Endothelial cell of umbilical vein (primary cell): ENCODE measurements at regions of chr17 and their contacts with region 1.

Region 1: DNA sequence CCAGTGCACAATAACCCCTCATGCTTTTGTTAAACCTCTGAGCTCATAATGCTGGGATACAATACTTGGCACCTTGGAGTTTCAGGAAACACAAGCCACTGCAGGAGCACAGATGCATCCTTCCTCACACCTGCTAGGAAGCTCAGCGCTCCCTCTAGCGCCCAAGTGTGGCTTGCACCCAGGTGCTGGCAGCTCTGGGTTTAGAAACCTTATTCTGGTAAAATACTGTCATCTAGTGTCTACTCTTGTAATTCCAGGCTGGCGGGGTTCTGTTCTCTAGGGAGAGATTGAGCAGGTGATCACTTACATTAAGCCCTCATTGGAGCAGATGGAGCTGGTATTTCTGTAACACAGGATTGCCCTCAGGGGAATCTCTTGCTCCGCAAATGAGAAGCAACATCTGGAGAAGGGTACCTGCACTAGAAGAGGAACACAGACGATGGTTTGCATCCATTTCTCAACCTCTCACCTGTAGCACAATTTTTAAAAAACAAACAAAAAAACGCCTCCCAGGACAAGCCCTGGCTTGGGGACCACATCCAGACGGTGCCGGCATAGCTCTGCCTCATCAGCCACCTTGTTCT is 1.5 kb downstream of the CCL1 start:
- DNase-seq: peak; percentile 93
- H3K4me3 ChIP-seq: no peak overlapping the region
- H3K27ac ChIP-seq: no peak overlapping the region
- H3K4me1 ChIP-seq: peaks cover 7% of the 10 kb centered on the region
- H3K27me3 ChIP-seq: peaks cover 0 to 2% of the 10 kb centered on the region in 2 experiments
- CTCF ChIP-seq: peak; percentile 99 to 100
- POLR2A ChIP-seq: no peak

Region 2: DNA sequence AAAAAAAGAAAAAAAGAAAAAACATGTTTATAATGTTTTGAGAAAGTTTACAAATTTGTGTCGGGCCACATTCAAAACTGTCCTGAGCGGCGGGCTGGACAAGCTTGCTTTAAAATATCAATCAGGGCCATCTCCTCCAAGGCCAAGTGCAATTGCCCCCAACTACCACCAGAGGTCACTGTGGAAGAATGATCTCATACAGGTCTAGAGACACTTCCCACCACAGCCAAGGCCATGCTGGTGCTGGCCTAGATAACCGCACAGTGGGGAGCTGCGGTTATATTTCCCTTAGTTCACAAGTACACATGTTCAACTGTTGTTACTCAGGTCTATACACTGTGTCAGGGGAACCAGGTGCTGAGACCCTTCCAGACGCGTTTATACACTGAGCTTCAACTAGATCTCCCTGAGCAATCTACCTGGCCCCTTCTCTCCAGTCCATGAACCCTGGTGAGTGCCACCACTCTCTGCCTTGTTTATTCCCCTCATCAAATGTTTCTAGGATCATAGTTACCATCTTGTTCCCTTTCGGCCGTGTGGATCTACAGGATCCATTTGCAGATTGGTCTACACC is 190.2 kb before region 1 on chr17:
- CTCF ChIA-PET with region 1: interaction called, 197 read pairs
- POLR2A ChIA-PET with region 1: no interaction called
- dilution Hi-C with region 1: no loop called
- intact Hi-C with region 1: loop called (anchors 1 kb)
- DNase-seq: peak; percentile 73
- H3K4me3 ChIP-seq: no peak overlapping the region
- H3K27ac ChIP-seq: no peak overlapping the region
- H3K4me1 ChIP-seq: no peaks in the 10 kb centered on the region
- H3K27me3 ChIP-seq: peaks cover 12 to 19% of the 10 kb centered on the region in 2 experiments
- CTCF ChIP-seq: peak; percentile 87 to 91
- POLR2A ChIP-seq: no peak

Region 3: DNA sequence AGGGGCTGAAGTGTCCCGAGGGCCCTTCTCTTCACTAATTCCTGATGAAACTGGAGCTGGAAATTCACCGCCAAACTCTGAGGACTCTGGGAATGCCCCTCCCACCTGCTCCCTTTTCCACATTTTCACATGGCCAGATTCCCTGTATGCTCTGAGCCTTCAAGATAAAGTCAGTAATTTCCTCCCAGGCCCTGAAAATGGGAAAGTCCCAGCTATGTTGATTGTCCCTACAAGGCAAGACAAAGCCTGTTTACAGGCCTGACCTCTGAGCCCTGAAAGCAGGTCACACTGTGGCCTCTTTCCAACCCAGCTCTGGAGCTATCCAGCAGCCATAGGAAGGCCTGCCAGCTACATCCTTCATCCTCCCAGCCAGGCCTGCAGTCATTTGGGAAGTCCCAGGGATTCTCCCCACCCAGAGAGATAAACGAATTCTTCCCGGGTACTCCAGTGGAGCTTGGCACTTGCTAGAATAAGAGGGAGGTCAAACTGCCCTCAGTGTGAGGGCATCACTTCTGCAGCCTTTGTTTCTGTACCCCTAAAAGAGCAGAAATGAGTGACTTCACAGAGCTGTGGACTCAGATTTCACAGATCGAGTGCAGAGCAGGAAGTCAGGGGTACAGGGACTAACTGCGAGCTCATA is 126.1 kb before region 1 on chr17:
- CTCF ChIA-PET with region 1: interaction called, 51 read pairs
- POLR2A ChIA-PET with region 1: interaction called, 3 read pairs
- dilution Hi-C with region 1: no loop called
- intact Hi-C with region 1: loop called (anchors 1 kb)
- DNase-seq: peak; percentile 97
- H3K4me3 ChIP-seq: no peak overlapping the region
- H3K27ac ChIP-seq: peak overlapping the region; percentile 78
- H3K4me1 ChIP-seq: peaks cover 54% of the 10 kb centered on the region
- H3K27me3 ChIP-seq: no peaks in the 10 kb centered on the region
- CTCF ChIP-seq: no peak
- POLR2A ChIP-seq: no peak

Region 4: GRCh38 chr17:34269969-34270368 is 91.6 kb before region 1 on chr17 and contains the start of gene CCL7:
- CTCF ChIA-PET with region 1: interaction called, 28 read pairs
- POLR2A ChIA-PET with region 1: no interaction called
- dilution Hi-C with region 1: no loop called
- intact Hi-C with region 1: no loop called
- DNase-seq: peak; percentile 79
- H3K4me3 ChIP-seq: no peak within 1 kb of the TSS
- H3K27ac ChIP-seq: no peak within 1 kb of the TSS
- H3K4me1 ChIP-seq: peaks cover 7% of the 10 kb centered on the region
- H3K27me3 ChIP-seq: peaks cover 0 to 7% of the 10 kb centered on the region in 2 experiments
- CTCF ChIP-seq: no peak
- POLR2A ChIP-seq: no peak
- total RNA-seq, gene CCL7: not detected in 2 replicates

Region 5: DNA sequence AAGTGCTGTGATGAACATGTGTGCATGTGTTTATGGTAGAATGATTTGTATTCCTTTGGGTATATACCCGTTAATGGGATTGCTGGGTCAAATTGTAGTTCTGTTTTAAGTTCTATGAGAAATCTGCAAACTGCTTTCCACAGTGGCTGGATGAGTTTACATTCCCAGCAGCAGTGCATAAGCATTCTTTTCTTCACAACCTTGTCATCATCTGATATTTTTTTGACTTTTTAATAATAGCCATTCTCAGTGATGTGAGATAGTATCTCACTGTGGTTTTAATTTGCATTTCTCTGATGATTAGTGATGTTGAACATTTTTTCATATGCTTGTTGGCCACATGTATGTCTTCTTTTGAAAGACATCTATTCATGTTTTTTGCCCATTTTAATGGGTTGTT is 23.9 kb before region 1 on chr17:
- CTCF ChIA-PET with region 1: interaction called, 19 read pairs
- POLR2A ChIA-PET with region 1: no interaction called
- dilution Hi-C with region 1: no loop called
- intact Hi-C with region 1: no loop called
- DNase-seq: no peak
- H3K4me3 ChIP-seq: no peak overlapping the region
- H3K27ac ChIP-seq: no peak overlapping the region
- H3K4me1 ChIP-seq: no peaks in the 10 kb centered on the region
- H3K27me3 ChIP-seq: peaks cover 0 to 7% of the 10 kb centered on the region in 2 experiments
- CTCF ChIP-seq: no peak
- POLR2A ChIP-seq: no peak

Region 6: GRCh38 chr17:34420254-34420766 is 58.7 kb after region 1 on chr17:
- CTCF ChIA-PET with region 1: interaction called, 20 read pairs
- POLR2A ChIA-PET with region 1: no interaction called
- dilution Hi-C with region 1: no loop called
- intact Hi-C with region 1: no loop called
- DNase-seq: peak; percentile 78
- H3K4me3 ChIP-seq: no peak overlapping the region
- H3K27ac ChIP-seq: no peak overlapping the region
- H3K4me1 ChIP-seq: no peaks in the 10 kb centered on the region
- H3K27me3 ChIP-seq: peaks cover 25 to 26% of the 10 kb centered on the region in 2 experiments
- CTCF ChIP-seq: peak; percentile 88 to 93
- POLR2A ChIP-seq: no peak